ENCODE measurements at regions of chr9 and their contacts with region 1.

Region 1: GRCh38 chr9:5922192-5922591 is 31.5 kb downstream of the MLANA start:
- DNase-seq: peak; percentile 30
- H3K4me3 Mint-ChIP-seq: peak overlapping the region; percentile 14
- H3K27ac Mint-ChIP-seq: peak overlapping the region; percentile 78
- H3K4me1 Mint-ChIP-seq: peaks cover 21% of the 10 kb centered on the region
- H3K27me3 Mint-ChIP-seq: no peaks in the 10 kb centered on the region
- CTCF ChIP-seq: no peak

Region 2: GRCh38 chr9:5886114-5886939 is 35.9 kb before region 1 on chr9:
- CTCF ChIA-PET with region 1: no interaction called
- intact Hi-C with region 1: loop called (anchors 1 kb)
- DNase-seq: peak; percentile 82
- H3K4me3 Mint-ChIP-seq: no peak overlapping the region
- H3K27ac Mint-ChIP-seq: no peak overlapping the region
- H3K4me1 Mint-ChIP-seq: peaks cover 9% of the 10 kb centered on the region
- H3K27me3 Mint-ChIP-seq: no peaks in the 10 kb centered on the region
- CTCF ChIP-seq: peak; percentile 82

Region 3: GRCh38 chr9:6153425-6153824 is 231.2 kb after region 1 on chr9:
- CTCF ChIA-PET with region 1: no interaction called
- intact Hi-C with region 1: no loop called
- DNase-seq: no peak
- H3K4me3 Mint-ChIP-seq: peak overlapping the region; percentile 46
- H3K27ac Mint-ChIP-seq: peak overlapping the region; percentile 88
- H3K4me1 Mint-ChIP-seq: peaks cover 40% of the 10 kb centered on the region
- H3K27me3 Mint-ChIP-seq: no peaks in the 10 kb centered on the region
- CTCF ChIP-seq: no peak